Common myeloid progenitor, CD34-positive (primary cell): ENCODE measurements at regions of chr7 and their contacts with region 1.

Region 1: DNA sequence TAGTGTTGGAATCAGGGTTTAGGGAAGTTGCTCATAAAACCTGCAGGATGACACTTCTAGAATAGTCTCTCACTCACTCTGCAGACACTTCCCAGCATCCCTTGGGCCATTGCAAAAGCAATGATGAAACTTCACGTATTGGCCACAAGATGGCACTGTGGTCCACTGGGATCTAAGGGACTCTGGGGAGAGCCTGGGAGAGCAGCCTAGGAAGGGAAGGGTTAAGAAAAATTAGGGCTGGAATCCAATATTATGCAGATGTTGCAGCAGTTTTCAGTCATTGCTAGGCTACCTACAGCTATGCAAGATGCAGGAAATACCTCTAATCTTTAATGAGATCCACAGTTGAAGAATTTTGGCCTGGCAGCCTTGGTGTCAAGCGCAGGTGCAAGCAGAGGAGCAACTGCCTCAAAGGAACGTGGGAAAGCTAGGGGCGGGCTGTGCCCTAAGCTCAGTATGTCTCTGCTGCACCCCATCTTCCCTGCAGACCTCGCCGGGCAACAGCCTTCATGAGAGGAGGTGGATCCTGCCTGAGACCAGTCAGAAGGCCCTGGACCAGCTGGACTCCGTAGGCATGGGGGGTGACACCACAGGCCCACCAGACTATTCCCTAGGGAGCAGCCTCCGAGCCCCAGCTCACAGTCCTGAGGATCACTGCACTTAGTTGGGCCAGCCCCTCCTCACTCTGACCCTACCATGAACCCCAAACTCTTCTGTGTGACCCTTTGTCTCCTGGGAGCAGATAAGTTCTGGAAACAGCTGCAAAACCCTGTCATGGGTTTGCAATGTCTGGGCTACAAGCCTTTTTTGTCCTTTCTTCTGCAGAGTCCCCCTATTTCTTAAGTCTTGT is 127.9 kb upstream of the PRSS58 start:
- DNase-seq: peak; percentile 81 to 85 (median 83)
- H3K4me3 ChIP-seq: no peak overlapping the region
- H3K27ac ChIP-seq: no peak overlapping the region
- H3K4me1 ChIP-seq: peaks cover 6 to 41% (median 34%) of the 10 kb centered on the region in 4 experiments
- H3K27me3 ChIP-seq: no peaks in the 10 kb centered on the region

Region 2: DNA sequence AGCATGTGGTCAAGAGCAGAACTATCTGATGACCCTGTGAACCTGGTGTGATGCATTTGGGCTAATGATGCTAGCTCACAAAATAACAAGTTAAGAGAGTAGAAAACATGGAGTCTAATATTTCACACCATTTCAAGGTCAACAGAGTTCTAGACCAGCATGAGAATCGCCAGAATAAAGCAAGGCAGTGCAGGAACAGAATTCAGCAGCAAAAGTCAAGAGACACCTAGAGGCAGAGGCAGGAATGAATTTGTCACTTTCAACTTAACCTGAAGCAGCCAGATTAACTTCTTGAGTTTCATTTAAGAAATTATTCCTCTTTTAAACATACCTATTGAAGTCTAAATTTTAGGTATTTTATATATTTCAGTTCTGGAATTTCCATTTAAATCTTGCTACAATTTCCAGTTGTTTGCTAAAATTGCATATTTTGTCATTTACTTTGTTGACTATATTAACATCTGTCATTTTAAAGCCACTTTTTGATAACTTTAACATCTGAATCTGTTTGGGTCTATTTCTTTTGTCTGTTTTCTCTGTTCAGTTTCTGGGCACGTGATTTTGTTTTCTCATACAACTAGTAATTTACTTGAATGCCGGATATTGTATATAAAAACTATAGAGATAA is 83.7 kb before region 1 on chr7:
- CTCF ChIA-PET with region 1: interaction called, 21 read pairs
- POLR2A ChIA-PET with region 1: no interaction called
- DNase-seq: peak in 2 of 3 donors; percentile 71
- H3K4me3 ChIP-seq: no peak overlapping the region
- H3K27ac ChIP-seq: no peak overlapping the region
- H3K4me1 ChIP-seq: peaks cover 29 to 75% (median 58%) of the 10 kb centered on the region in 4 experiments
- H3K27me3 ChIP-seq: no peaks in the 10 kb centered on the region

Region 3: GRCh38 chr7:142365410-142365842 is 20.3 kb before region 1 on chr7:
- CTCF ChIA-PET with region 1: interaction called, 152 read pairs
- POLR2A ChIA-PET with region 1: no interaction called
- DNase-seq: no peak
- H3K4me3 ChIP-seq: no peak overlapping the region
- H3K27ac ChIP-seq: no peak overlapping the region
- H3K4me1 ChIP-seq: peaks cover 0 to 5% (median 1%) of the 10 kb centered on the region in 4 experiments
- H3K27me3 ChIP-seq: no peaks in the 10 kb centered on the region

Region 4: GRCh38 chr7:142405122-142405765 is 19.5 kb after region 1 on chr7:
- CTCF ChIA-PET with region 1: interaction called, 36 read pairs
- POLR2A ChIA-PET with region 1: no interaction called
- DNase-seq: no peak
- H3K4me3 ChIP-seq: no peak overlapping the region
- H3K27ac ChIP-seq: no peak overlapping the region
- H3K4me1 ChIP-seq: peaks cover 3 to 18% (median 17%) of the 10 kb centered on the region in 4 experiments
- H3K27me3 ChIP-seq: no peaks in the 10 kb centered on the region

Region 5: DNA sequence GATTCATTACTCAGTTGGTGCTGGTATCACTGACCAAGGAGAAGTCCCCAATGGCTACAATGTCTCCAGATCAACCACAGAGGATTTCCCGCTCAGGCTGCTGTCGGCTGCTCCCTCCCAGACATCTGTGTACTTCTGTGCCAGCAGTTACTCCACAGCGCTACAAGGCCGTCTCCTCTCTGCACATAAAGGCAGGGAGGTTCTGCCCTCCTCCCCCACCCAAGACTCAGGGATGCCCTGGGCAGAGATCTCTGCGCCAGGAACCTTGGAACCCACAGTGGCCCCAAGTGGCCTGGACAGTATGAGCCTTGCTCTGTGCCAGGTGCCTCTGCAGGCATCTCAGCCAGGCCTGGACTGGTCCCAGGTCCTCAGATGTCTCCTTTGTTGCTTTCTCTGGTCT is 65.6 kb after region 1 on chr7:
- CTCF ChIA-PET with region 1: no interaction called
- POLR2A ChIA-PET with region 1: no interaction called
- DNase-seq: peak in 2 of 3 donors; percentile 83 to 88
- H3K4me3 ChIP-seq: peak overlapping the region in 2 of 7 experiments; percentile 15 to 24
- H3K27ac ChIP-seq: peak overlapping the region; percentile 13 to 37
- H3K4me1 ChIP-seq: peaks cover 13 to 57% (median 40%) of the 10 kb centered on the region in 4 experiments
- H3K27me3 ChIP-seq: no peaks in the 10 kb centered on the region

Region 6: GRCh38 chr7:142496545-142497041 is 110.9 kb after region 1 on chr7:
- CTCF ChIA-PET with region 1: interaction called, 10 read pairs
- POLR2A ChIA-PET with region 1: no interaction called
- DNase-seq: peak; percentile 70 to 84 (median 83)
- H3K4me3 ChIP-seq: peak overlapping the region in 4 of 7 experiments; percentile 21 to 57 (median 36)
- H3K27ac ChIP-seq: peak overlapping the region; percentile 27 to 32
- H3K4me1 ChIP-seq: peaks cover 11 to 69% (median 52%) of the 10 kb centered on the region in 4 experiments
- H3K27me3 ChIP-seq: no peaks in the 10 kb centered on the region